ENCODE measurements at regions of chr3 and their contacts with region 1.

Region 1: GRCh38 chr3:105827959-105828358 is 40.9 kb downstream of the CBLB start:
- DNase-seq: peak; percentile 53
- H3K4me3 Mint-ChIP-seq: peak overlapping the region; percentile 27
- H3K27ac Mint-ChIP-seq: peak overlapping the region; percentile 100
- H3K4me1 Mint-ChIP-seq: peaks cover 87% of the 10 kb centered on the region
- H3K27me3 Mint-ChIP-seq: no peaks in the 10 kb centered on the region

Region 2: GRCh38 chr3:105676621-105677300 is 151.2 kb before region 1 on chr3:
- CTCF ChIA-PET with region 1: no interaction called
- POLR2A ChIA-PET with region 1: no interaction called
- intact Hi-C with region 1: loop called (anchors 1 kb)
- DNase-seq: peak; percentile 77
- H3K4me3 Mint-ChIP-seq: no peak overlapping the region
- H3K27ac Mint-ChIP-seq: peak overlapping the region; percentile 86
- H3K4me1 Mint-ChIP-seq: peaks cover 9% of the 10 kb centered on the region
- H3K27me3 Mint-ChIP-seq: no peaks in the 10 kb centered on the region

Region 3: GRCh38 chr3:105752744-105753415 is 75.1 kb before region 1 on chr3:
- CTCF ChIA-PET with region 1: no interaction called
- POLR2A ChIA-PET with region 1: interaction called, 4 read pairs
- intact Hi-C with region 1: loop called (anchors 2 kb)
- DNase-seq: peak; percentile 41
- H3K4me3 Mint-ChIP-seq: peak overlapping the region; percentile 21
- H3K27ac Mint-ChIP-seq: peak overlapping the region; percentile 87
- H3K4me1 Mint-ChIP-seq: peaks cover 75% of the 10 kb centered on the region
- H3K27me3 Mint-ChIP-seq: no peaks in the 10 kb centered on the region

Region 4: DNA sequence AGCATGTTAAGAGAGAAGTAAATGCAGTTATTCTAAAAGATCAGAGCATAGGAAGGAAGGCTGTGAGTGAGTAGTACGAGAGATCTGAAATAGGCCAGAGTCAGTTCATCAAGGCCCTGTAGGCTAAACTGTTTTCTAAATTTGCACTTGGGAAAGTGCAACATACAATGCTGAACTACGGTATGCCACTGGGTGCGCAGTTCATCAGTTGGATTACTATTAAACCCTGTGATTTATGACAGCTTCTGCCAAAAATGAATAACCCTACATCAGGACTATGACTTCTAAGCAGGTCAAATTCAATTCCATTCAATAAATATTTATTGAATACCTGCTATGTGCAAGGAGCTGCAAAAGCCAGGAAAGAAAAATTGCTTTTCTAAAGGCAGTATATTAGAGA is 30.1 kb after region 1 on chr3:
- CTCF ChIA-PET with region 1: no interaction called
- POLR2A ChIA-PET with region 1: no interaction called
- intact Hi-C with region 1: no loop called
- DNase-seq: no peak
- H3K4me3 Mint-ChIP-seq: no peak overlapping the region
- H3K27ac Mint-ChIP-seq: no peak overlapping the region
- H3K4me1 Mint-ChIP-seq: peaks cover 37% of the 10 kb centered on the region
- H3K27me3 Mint-ChIP-seq: no peaks in the 10 kb centered on the region

Region 5: GRCh38 chr3:105868742-105869530 is 41.0 kb after region 1 on chr3 and contains the start of gene CBLB:
- CTCF ChIA-PET with region 1: no interaction called
- POLR2A ChIA-PET with region 1: interaction called, 14 read pairs
- intact Hi-C with region 1: loop called (anchors 1 kb)
- DNase-seq: peak; percentile 91
- H3K4me3 Mint-ChIP-seq: peak within 1 kb of the TSS; percentile 94
- H3K27ac Mint-ChIP-seq: peak within 1 kb of the TSS; percentile 94
- H3K4me1 Mint-ChIP-seq: peaks cover 38% of the 10 kb centered on the region
- H3K27me3 Mint-ChIP-seq: no peaks in the 10 kb centered on the region
- total RNA-seq, gene CBLB: 86.1 to 88.2 TPM

Region 6: DNA sequence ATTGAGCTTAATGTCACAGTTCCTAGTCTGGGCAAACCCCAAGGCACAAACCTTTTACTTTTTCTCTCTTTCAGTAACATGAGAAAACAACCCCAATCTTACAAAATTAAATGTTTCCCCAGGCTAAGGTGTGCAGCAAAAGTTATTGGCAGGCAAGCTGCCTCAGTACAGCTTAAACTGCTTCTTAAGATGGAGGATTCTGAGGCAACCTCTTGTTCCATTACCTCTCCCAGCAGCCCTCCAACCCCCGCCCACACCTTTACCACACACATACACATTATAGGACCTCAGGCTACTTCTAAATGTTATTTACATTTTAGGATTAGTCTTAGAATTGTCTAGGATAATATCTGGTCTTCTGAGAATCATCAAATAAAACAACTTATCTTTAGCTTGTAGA is 63.1 kb after region 1 on chr3:
- CTCF ChIA-PET with region 1: no interaction called
- POLR2A ChIA-PET with region 1: no interaction called
- intact Hi-C with region 1: no loop called
- DNase-seq: peak; percentile 29
- H3K4me3 Mint-ChIP-seq: no peak overlapping the region
- H3K27ac Mint-ChIP-seq: peak overlapping the region; percentile 47
- H3K4me1 Mint-ChIP-seq: peaks cover 8% of the 10 kb centered on the region
- H3K27me3 Mint-ChIP-seq: no peaks in the 10 kb centered on the region

Region 7: DNA sequence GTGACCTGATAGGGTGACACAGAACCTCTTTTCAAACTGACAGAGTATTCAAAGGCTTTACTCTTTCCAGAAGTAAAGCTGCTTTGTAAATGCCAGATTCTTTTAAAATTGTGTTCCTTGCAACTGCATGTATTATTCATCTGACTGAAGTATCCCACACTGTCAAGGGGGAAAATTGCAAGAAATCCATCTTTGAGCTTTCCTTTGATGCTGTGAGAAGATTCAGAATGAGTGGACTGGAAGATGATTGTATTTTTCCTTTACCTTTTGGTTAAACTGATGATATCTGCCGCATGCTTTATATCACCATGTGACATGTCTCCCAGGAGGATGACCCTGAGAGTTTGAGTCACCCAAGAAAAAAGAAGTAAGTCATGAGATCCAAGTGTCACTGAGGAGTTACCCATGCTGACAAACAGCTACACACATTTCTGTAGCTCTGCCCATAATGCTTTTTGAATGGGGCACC is 291.7 kb after region 1 on chr3:
- CTCF ChIA-PET with region 1: no interaction called
- POLR2A ChIA-PET with region 1: no interaction called
- intact Hi-C with region 1: loop called (anchors 5 kb)
- DNase-seq: peak; percentile 42
- H3K4me3 Mint-ChIP-seq: no peak overlapping the region
- H3K27ac Mint-ChIP-seq: peak overlapping the region; percentile 50
- H3K4me1 Mint-ChIP-seq: peaks cover 21% of the 10 kb centered on the region
- H3K27me3 Mint-ChIP-seq: no peaks in the 10 kb centered on the region

Region 8: DNA sequence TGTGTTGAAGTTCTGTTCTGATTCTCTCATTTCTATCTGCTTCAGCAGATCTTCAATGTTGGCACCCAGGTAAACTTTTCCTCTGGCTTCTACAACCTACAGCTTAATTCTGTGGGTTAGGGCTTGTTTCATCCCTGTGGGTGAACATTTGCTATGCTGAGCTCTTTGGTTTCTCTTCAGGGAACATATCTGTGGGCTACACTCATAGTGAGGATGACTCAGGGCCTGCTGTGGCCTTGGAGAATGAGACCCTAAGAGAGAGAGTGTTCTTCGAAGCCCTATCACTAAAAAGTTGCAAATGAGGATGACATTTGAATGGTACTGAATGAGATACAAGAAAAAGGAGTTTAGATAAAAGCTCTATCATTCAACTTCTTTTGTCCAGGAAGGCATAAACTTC is 387.1 kb after region 1 on chr3:
- CTCF ChIA-PET with region 1: no interaction called
- POLR2A ChIA-PET with region 1: no interaction called
- intact Hi-C with region 1: loop called (anchors 2 kb)
- DNase-seq: peak; percentile 64
- H3K4me3 Mint-ChIP-seq: no peak overlapping the region
- H3K27ac Mint-ChIP-seq: peak overlapping the region; percentile 68
- H3K4me1 Mint-ChIP-seq: peaks cover 61% of the 10 kb centered on the region
- H3K27me3 Mint-ChIP-seq: no peaks in the 10 kb centered on the region

Region 9: DNA sequence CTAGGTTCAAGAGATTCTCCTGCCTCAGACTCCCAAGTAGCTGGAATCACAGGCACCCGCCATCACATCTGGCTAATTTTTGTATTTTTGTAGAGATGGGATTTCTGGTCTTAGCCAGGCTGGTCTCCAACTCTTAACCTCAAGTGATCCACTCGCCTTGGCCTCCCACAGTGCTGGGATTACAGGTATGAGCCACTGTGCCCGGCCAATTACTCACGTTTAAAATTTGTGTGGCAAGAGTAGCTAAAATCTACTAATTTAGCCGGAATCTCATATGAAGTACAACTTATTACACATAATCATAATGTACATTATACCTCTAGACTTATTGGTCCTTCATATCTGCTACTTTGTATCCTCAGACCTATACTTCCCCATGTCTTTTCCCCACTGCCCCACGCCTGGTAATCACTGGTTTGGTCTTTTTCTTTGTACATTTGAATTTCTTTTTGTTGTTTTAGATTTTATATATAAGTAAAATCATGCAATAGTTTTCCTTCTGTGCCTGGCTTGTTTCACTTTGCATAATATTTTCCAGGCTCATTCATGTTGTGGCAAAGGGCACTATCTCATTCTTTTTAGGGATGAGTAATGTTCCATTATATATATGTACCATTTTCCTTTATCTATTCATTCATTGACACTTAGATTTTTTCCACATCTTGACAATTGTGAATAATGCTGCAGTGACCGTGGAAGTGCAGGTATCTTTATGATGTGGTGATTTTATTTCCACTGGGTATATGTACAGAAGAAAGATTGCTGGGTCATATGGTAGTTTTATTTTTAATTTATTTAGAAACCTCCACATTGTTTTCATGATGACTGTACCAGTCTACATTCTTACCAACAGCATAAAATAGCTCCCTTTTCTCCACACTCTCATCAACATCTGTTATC is 645.9 kb after region 1 on chr3:
- CTCF ChIA-PET with region 1: no interaction called
- POLR2A ChIA-PET with region 1: no interaction called
- intact Hi-C with region 1: loop called (anchors 5 kb)
- DNase-seq: peak; percentile 53
- H3K4me3 Mint-ChIP-seq: no peak overlapping the region
- H3K27ac Mint-ChIP-seq: peak overlapping the region; percentile 71
- H3K4me1 Mint-ChIP-seq: peaks cover 19% of the 10 kb centered on the region
- H3K27me3 Mint-ChIP-seq: no peaks in the 10 kb centered on the region

Region 10: GRCh38 chr3:106688463-106688862 is 860.5 kb after region 1 on chr3:
- CTCF ChIA-PET with region 1: no interaction called
- POLR2A ChIA-PET with region 1: no interaction called
- intact Hi-C with region 1: no loop called
- DNase-seq: no peak
- H3K4me3 Mint-ChIP-seq: no peak overlapping the region
- H3K27ac Mint-ChIP-seq: no peak overlapping the region
- H3K4me1 Mint-ChIP-seq: no peaks in the 10 kb centered on the region
- H3K27me3 Mint-ChIP-seq: no peaks in the 10 kb centered on the region

Measured in activated CD4-positive, alpha-beta memory T cell treated with anti-CD3 and anti-CD28 coated beads for 36 hours (primary cell).